Posterior cingulate gyrus (tissue), 11 donors: ENCODE measurements at regions of chr16 and their contacts with region 1.

Region 1: DNA sequence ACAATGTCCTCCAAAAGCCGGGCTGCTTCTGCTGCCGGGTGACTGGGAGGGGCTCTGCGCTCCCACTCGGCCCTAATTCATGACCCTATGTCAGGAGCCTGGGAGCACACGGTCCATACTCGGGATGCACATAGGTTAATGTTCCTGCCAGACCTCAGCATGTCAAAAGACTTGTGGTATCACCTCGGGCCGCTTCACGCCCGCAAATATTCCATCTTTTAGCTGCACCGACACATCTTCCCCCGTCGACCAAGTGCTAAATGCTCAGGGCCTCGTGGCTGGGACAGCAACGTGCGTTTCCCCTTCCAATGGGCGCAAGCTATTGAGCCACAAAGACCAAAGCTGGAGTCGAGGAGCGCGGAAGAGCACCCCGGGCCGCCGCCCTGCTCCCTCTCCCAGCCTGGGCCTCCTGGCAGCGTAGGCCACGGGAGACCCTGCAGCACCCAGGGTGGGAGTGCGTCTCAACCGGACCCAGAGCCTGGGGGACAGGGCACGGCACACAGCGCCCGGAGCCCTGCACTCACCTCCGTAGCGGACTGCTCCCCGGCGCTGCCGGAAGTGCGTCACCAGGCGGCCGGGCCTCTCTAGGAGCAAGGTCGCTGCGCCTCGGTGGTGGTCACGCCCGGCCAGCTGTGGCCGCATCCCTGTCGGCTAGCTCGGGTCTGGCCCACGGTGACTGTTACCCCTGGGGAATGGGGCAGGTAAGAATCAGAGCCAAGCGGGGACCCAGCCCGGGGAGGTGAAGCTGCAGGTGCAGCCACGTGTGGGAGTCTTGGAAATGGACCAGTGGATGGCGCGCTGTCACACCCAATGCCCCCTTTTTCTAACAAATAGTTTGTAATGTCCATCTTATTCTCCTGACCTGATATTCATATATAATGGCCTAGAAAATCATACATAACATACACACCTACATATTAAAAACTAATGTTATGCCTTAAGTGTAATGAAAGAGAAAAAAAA is at the start of gene ZNF23:
- DNase-seq: peak; percentile 83 to 98 (median 89)

Region 2: DNA sequence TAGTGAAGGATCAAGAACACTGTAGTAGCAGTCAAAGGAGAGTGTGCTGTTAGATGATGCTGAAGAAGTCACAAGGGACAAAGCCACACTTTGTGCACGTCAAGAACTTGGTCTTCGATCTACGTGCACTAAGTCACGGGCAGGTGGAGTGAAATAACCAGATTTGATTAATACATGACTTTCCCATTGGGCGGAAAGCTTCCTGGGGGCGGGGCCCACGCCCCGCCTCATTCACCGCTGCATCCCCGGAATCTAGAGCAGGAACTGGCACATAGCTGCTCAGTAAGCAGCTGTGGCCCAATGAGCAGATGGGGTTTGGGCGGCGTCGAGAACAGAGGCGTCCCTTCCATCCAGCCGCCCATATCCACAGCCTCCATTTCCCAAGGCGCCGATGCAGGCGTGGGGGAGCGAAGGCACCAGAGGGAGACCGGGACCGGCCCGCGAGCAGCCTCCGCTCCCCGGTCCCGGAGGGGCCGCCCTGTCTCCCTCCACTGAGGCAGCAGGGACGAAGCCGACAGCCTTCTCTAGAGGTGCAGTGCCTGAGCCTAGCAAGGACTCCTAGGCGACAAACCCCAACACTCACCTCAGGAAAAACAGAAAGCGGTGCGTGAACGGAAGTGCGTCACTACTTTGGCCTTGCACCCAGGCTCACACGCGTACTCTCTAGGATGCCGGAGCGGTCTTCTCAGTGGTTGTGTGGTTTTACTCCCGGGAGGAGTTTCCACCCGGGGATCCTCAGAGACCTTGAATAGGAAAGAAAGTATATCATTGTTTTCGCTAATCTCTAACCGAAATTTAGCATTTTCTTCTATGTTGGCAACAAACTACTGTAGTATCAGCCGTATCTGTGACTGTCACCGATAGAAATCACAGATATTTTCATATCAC is 22.3 kb after region 1 on chr16:
- intact Hi-C with region 1: loop called (anchors 1 kb)
- DNase-seq: peak; percentile 82 to 98 (median 90)

Region 3: DNA sequence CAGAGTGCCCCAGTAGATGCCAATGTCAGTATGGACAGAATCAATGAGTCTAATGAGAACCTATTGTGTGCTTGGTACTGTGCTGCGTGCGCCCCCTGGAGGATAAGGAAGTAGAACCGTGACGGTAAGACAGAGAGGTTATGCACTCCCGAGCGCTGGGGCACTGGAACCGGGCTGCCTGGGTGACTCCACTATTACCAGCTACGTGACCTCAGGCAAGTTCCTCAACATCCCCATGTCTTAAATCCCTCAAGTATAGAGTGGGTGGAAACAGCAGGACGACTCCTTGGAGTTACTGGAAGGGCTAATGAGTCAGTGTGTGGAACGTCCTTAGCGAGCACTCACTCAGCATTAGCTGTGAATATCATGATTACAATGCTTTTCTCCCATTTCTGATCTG is 80.4 kb after region 1 on chr16:
- intact Hi-C with region 1: no loop called
- DNase-seq: peak in 1 of 10 donors; percentile 34

Region 4: DNA sequence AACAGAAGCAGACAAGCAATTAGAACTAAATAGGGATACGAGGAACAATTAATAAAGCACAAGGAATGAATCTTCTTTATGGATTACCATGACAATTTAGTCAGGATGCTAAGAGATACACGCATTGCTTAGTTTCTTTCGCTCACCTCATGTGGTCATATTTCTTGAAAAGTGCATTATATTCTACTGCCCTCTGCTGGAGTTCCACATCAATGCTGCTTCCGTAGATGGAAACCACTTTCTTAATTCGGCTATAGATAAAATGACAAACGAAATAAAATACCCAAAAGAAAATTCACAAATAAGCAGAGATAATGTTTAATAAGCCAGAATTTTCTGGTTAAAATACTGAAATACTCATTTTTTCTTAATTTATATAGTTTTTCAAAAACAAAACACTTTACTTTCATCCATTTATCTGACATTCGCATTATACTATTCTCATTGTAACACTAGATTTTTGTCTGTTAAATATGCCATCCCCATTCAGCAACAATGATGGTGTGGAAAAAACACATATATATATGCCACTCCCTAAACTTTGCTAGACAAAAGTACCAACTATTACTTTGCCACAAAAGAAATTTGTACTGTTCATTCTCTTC is 284.6 kb after region 1 on chr16:
- intact Hi-C with region 1: no loop called
- DNase-seq: peak in 1 of 10 donors; percentile 22